ENCODE measurements at regions of chr9 and their contacts with region 1.

Region 1: GRCh38 chr9:38339087-38339486 is 53.4 kb upstream of the ALDH1B1 start:
- DNase-seq: no peak
- H3K4me3 ChIP-seq: no peak overlapping the region
- H3K27ac ChIP-seq: no peak overlapping the region
- H3K4me1 ChIP-seq: no peaks in the 10 kb centered on the region
- H3K27me3 ChIP-seq: no peaks in the 10 kb centered on the region
- CTCF ChIP-seq: no peak
- POLR2A ChIP-seq: no peak

Region 2: DNA sequence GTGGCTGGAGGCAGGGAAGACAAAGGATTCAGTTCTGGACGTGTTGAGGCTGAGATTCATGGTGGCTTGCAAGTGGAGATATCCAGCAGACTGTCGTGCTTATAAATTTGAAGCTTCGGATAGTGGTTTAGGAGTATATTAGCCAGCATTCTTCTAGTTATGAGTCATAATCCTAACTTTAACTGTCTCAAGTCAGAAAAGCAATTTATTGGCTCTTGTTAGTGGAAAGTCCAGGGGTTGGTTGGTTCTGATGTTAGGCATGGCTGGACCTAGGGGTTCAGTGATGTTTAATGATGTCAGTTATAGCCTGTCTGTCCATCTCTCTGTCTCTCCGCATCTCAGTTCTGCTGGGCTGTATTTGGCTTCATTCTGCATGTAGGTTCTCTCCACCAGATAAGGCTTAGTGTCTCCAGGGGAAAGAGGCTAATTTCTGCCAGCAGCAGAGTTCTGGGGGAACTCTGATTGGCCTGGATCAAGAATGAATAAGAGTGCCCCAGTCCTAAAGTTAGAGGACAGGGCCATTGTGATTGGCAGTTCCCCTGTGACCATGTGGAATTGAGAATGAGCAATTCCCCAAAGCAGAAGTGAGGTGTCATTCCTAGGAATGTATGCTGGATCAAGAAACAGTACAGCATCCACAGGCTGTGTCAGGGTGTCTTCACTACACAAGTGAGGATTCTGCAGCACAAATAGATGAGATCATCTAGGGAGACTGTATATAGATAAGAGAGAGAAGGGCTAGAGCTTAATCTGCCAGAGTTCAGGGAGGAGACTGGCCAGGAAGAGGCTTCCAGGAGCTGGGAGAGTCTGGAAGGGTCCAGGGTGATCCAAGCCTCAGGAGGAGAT is 197.1 kb before region 1 on chr9:
- intact Hi-C with region 1: loop called (anchors 10 kb)
- DNase-seq: no peak
- H3K4me3 ChIP-seq: no peak overlapping the region
- H3K27ac ChIP-seq: no peak overlapping the region
- H3K4me1 ChIP-seq: no peaks in the 10 kb centered on the region
- H3K27me3 ChIP-seq: no peaks in the 10 kb centered on the region
- CTCF ChIP-seq: no peak
- POLR2A ChIP-seq: no peak